Activated CD8-positive, alpha-beta T cell treated with anti-CD3 and anti-CD28 coated beads for 36 hours (primary cell): ENCODE measurements at regions of chr3 and their contacts with region 1.

Region 1: DNA sequence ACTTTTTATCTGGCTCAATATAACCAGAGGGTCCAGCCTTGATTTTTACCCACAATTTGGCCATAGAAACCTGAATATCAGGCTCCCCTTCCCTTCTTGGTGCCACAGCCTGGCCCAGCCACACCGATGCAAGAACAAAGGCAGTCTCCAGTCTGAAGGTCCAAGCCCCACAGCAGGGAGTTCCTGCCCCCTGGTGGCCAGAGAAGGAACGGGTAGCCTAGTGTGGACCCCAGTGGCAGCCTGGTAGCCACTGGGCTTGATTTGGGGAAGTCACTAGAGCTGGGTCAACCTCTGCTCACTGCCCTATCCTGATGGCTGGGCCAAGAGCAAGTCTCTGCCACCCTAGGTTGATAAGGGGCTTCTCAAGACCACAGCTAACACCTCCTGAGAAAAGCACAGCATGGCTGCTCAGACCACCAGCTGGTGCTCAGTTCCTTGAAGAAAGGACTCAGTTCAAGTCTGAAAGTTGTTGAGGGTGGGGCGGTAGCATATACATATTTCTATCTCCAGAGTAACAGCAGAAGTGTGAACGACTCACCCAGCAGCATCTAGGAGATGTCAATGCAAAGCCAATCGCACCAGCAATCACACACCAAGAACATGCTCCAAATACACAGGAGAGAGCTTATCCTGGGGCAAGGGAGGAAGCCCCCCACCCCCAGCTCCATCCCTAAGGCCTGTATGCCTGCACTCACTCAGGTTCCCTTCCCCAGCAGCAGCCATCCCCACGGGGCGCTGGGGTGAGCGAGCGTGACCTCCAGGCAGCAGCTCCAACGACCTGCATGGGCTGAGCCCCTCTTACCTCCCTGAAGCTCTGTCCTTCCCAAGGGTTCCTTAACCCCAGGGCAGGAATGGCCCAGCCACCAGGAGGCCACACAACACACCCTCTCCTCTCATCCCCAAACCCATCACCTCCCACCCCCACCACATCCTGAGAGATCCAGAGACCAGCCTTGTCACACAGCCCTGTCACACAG is 7.6 kb downstream of the PFKFB4 start:
- DNase-seq: peak; percentile 89
- ATAC-seq: peak; percentile 98
- H3K4me3 Mint-ChIP-seq: no peak overlapping the region
- H3K27ac Mint-ChIP-seq: no peak overlapping the region
- H3K4me1 Mint-ChIP-seq: peaks cover 8% of the 10 kb centered on the region
- H3K27me3 Mint-ChIP-seq: no peaks in the 10 kb centered on the region
- CTCF ChIP-seq: peak; percentile 92

Region 2: DNA sequence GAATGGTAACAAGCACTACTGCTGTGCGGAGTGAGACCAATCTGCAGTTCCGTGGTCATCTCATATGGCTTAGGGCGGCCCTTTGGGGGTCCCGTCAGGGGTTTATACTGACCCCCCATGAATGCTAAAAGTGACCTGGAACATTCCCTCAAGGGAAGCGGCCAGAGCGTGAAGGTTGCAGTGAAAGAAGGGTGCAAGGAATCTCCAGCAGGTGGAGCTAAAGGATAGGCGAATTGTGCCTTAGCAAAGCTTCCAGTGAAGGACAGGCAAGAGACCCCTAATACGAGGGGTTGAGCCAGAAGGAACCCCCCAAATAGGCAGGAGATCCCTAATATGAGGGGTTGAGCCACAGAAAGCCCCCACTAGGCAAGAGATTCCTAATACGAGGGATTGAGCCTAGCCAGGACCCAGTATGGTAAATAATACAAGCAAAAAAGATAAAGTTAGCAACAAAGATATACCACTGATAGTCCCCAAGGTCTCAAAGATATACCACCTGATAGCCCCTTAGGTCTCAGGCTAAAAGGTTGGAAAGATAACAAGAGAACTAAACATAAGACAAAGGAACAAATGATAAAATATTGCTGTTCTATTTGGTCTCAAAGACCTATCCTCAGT is 275.3 kb before region 1 on chr3:
- CTCF ChIA-PET with region 1: interaction called, 3 read pairs
- POLR2A ChIA-PET with region 1: no interaction called
- intact Hi-C with region 1: loop called (anchors 10 kb)
- DNase-seq: peak; percentile 67
- ATAC-seq: peak; percentile 24
- H3K4me3 Mint-ChIP-seq: no peak overlapping the region
- H3K27ac Mint-ChIP-seq: no peak overlapping the region
- H3K4me1 Mint-ChIP-seq: peaks cover 23% of the 10 kb centered on the region
- H3K27me3 Mint-ChIP-seq: no peaks in the 10 kb centered on the region
- CTCF ChIP-seq: peak; percentile 79

Region 3: DNA sequence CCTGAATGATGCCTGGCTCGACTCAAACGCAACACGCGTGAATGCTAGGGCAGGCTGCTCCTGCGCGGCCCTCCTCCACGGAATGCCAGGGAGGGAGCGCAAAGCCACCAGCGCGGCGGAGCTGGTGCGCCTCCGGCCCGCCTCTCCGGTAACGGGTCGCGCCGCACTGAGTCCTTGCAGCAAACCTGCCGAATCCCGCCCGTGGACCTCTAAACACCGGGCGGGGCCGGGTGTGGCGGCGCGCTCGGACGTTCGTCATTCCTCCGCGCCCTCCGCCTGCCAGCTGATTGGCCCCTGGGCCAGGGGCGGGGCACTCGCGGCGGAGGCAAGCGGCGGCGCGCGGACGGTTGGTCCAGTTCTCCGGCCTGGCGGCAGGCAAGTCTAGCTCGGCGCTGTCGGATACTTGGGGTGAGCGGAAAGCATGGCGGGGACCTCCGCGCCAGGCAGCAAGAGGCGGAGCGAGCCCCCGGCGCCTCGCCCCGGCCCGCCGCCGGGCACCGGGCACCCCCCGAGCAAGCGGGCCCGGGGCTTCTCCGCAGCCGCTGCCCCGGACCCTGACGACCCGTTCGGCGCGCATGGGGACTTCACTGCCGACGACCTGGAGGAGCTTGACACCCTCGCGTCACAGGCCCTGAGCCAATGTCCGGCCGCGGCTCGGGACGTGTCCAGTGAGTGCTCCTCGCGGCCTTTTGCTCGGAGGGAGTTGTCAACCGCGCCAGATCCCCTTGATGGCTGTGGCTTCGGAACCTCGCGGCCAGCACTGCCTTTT is 102.4 kb before region 1 on chr3 and contains the start of gene ATRIP:
- CTCF ChIA-PET with region 1: interaction called, 19 read pairs
- POLR2A ChIA-PET with region 1: interaction called, 3 read pairs
- intact Hi-C with region 1: no loop called
- DNase-seq: peak; percentile 87
- ATAC-seq: peak; percentile 98
- H3K4me3 Mint-ChIP-seq: peak within 1 kb of the TSS; percentile 89
- H3K27ac Mint-ChIP-seq: peak within 1 kb of the TSS; percentile 83
- H3K4me1 Mint-ChIP-seq: peaks cover 40% of the 10 kb centered on the region
- H3K27me3 Mint-ChIP-seq: no peaks in the 10 kb centered on the region
- CTCF ChIP-seq: no peak
- total RNA-seq, gene ATRIP: 12.4 to 15.0 TPM

Region 4: DNA sequence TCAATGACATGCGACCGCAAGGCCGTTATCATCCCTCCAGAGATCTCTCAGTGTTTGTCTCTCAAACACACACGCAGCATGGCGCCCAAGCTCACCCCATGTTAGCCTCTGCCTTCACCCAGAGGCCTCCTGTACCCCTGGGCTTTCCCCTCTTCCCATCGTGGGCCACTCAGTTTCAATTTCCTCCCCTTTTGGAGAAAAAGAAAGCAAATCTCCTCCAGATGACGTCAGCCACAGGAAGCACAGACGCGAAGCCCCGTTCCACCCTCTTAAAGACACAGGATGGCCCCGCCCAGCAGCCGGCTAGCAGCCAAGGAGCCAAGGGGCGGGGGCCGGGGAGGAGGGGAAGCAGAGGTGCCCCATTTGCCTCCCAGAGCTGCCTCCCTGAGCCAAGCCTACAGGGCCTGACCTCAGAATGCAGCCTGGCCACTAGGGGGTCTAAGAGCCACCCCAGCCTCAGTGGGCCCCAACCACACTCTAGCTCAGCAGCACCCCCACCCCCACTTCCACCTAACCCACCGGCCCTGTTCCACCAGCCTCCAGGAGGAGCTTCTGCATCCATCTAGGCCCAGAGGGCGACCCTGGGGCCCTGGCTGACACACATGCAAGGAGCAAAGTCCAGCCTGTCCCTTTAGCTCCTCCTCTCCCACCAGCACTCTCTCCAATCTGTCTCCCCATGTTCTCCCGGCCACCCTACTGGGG is 76.0 kb before region 1 on chr3:
- CTCF ChIA-PET with region 1: interaction called, 24 read pairs
- POLR2A ChIA-PET with region 1: interaction called, 4 read pairs
- intact Hi-C with region 1: loop called (anchors 5 kb)
- DNase-seq: peak; percentile 99
- ATAC-seq: peak; percentile 92
- H3K4me3 Mint-ChIP-seq: peak overlapping the region; percentile 80
- H3K27ac Mint-ChIP-seq: peak overlapping the region; percentile 96
- H3K4me1 Mint-ChIP-seq: peaks cover 50% of the 10 kb centered on the region
- H3K27me3 Mint-ChIP-seq: no peaks in the 10 kb centered on the region
- CTCF ChIP-seq: peak; percentile 55

Region 5: DNA sequence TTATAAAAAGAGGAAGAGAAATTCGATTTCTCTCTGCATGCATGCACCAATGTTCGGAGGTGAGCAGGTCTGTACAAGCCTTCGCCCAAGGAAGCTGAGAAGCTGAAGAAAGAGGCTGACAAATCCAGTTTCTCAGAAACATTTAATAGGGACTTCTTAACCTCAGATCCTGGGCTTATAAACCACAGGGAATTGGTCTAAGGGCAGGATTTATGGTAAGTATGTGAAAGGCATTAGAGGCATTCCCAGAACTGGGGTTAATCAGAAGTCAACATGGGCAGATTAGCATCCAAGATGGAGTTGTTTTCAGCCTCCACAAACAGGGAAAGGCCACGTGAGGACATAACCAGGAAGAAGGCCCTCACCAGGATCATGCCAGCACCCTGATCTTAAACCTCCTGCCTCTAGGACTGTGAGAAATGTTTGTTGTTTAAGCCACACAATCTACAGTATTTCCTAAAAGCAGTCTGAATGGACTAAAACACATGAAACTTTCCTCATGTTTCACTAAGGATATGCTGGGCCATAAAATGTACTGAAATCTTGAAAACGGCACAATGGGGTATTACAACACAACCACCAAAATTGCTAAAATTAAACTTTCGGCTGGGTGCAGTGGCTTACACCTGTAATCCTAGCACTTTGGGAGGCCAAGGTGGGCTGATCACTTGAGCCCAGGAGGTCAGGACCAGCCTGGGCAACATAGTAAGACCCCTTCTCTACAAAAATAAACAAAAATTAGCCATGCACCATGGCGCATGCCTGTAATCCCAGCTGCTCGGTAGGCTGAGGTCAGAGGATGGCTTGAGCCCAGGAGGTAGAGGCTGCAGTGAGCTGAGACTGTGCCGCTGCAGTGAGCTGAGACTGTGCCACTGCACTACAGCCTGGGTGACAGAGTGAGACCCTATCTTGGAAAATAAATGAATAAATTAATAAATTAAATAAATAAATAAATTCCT is 56.2 kb before region 1 on chr3:
- CTCF ChIA-PET with region 1: no interaction called
- POLR2A ChIA-PET with region 1: no interaction called
- intact Hi-C with region 1: no loop called
- DNase-seq: no peak
- ATAC-seq: no peak
- H3K4me3 Mint-ChIP-seq: no peak overlapping the region
- H3K27ac Mint-ChIP-seq: no peak overlapping the region
- H3K4me1 Mint-ChIP-seq: no peaks in the 10 kb centered on the region
- H3K27me3 Mint-ChIP-seq: no peaks in the 10 kb centered on the region
- CTCF ChIP-seq: no peak

Region 6: GRCh38 chr3:48514436-48515227 is 34.4 kb before region 1 on chr3:
- CTCF ChIA-PET with region 1: interaction called, 7 read pairs
- POLR2A ChIA-PET with region 1: no interaction called
- intact Hi-C with region 1: loop called (anchors 5 kb)
- DNase-seq: peak; percentile 46
- ATAC-seq: peak; percentile 37
- H3K4me3 Mint-ChIP-seq: no peak overlapping the region
- H3K27ac Mint-ChIP-seq: no peak overlapping the region
- H3K4me1 Mint-ChIP-seq: peaks cover 44% of the 10 kb centered on the region
- H3K27me3 Mint-ChIP-seq: no peaks in the 10 kb centered on the region
- CTCF ChIP-seq: no peak

Region 7: DNA sequence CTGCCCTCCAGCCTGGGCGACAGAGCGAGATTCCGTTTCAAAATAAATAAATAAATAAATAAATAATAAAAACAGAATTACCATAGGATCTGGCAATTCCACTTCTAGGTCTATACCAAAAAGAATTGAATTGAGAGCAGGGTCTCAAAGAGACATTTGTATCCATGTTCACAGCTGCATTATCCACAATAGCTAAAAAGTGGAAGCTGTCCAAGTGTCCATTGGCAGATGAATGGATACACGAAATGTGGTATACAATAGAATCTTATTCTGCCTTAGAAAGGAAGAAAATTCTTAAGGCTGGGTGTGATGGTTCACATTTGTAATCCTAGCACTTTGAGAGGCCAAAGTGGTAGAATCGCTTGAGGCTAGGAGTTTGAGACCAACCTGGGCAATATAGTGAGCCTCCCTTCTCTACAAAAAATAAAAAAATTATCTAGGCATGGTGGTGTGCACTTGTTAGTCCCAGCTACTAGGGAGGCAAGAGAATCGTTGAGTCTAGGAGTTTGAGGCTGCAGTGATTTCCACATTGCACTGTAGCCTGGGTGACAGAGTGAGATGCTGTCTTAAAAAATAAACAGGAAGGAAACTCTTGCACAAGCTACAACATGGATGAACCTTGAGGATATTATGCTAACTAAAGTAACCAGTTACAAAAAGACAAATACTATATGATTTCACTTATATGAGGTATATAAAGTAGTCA is 16.6 kb before region 1 on chr3:
- CTCF ChIA-PET with region 1: interaction called, 18 read pairs
- POLR2A ChIA-PET with region 1: no interaction called
- intact Hi-C with region 1: no loop called
- DNase-seq: no peak
- ATAC-seq: no peak
- H3K4me3 Mint-ChIP-seq: no peak overlapping the region
- H3K27ac Mint-ChIP-seq: no peak overlapping the region
- H3K4me1 Mint-ChIP-seq: no peaks in the 10 kb centered on the region
- H3K27me3 Mint-ChIP-seq: no peaks in the 10 kb centered on the region
- CTCF ChIP-seq: no peak